ENCODE measurements at regions of chr1 and their contacts with region 1.

Region 1: DNA sequence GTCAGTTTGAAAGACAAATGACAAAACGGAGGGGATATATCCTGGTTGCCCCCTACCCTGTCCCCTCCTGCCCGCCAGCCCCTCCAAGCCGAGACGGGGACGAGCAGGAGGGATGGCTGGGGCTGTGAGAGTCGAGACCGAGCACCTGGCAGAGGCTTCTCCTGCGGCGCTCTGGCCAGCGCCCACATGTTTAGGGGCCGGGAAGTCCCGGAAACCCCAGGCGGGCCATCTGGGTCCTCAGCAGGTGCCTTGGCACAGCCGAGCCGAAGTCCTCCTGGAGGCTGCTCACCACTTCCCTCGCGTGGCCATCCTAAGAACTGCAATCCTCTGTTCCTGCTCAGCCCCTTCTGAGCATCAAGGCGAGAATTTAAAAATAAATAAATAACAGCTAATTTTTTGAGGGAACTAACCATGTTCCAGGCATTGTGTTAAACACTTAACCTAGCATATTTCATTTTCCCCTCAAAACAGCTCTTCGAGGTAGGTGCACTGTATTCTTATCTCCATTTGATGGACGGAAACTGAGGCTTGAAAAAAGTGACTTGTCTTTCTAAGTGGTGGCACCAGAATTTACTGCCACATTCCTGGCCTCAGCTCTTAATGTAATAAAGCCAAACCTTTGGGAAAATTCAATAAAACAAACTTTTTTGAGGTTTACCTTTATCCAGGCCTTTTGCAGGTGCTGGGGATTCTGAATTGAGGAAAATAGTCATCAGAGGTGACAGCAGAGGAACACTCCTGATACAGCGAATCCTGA is 3.5 kb upstream of the RIMS3 start:
- DNase-seq: peak; percentile 72
- H3K4me3 Mint-ChIP-seq: peak overlapping the region; percentile 59
- H3K27ac Mint-ChIP-seq: no peak overlapping the region
- H3K4me1 Mint-ChIP-seq: peaks cover 9% of the 10 kb centered on the region
- H3K27me3 Mint-ChIP-seq: peaks cover 5% of the 10 kb centered on the region

Region 2: GRCh38 chr1:40449684-40450494 is 219.1 kb before region 1 on chr1 and contains the start of gene ZFP69B:
- intact Hi-C with region 1: loop called (anchors 2 kb)
- DNase-seq: peak; percentile 86
- H3K4me3 Mint-ChIP-seq: peak within 1 kb of the TSS; percentile 84
- H3K27ac Mint-ChIP-seq: peak within 1 kb of the TSS; percentile 90
- H3K4me1 Mint-ChIP-seq: peaks cover 35% of the 10 kb centered on the region
- H3K27me3 Mint-ChIP-seq: no peaks in the 10 kb centered on the region
- total RNA-seq, gene ZFP69B: 5.1 and 5.8 TPM in 2 replicates

Region 3: DNA sequence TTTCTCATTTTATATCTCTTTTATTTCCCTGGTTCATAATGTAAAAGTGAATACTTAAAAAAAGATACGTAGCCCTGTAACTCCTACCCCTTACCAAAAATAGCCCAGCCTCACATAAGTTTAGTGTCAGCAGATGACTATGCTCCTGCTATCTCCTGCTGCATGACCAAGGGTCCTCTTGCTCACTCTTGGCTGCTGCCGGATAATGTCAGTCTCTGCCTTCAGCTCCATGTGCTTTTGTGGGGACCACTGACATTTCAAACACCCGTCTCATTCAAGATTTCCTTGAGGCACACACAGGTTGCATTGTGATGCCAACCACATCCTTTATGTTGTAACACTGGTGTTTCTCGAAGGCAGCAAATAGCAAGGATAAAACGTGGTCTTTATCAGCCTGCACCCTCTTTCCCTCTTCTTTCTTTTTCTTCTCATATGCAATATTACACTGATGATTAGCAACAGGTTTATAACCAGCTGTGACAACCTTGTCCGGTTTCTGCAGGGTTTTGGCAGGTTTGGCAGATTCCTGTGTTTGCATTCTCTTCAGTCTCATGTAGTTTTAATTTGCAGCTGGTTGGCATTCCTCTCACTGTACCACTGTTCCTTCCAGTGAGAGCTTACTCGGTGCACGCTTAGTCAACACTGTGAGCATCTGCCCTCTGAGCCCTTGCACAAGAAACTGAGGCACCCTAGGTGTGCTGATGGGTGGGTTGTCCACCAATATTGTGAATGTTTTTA is 75.3 kb before region 1 on chr1:
- intact Hi-C with region 1: no loop called
- DNase-seq: no peak
- H3K4me3 Mint-ChIP-seq: no peak overlapping the region
- H3K27ac Mint-ChIP-seq: no peak overlapping the region
- H3K4me1 Mint-ChIP-seq: peaks cover 16% of the 10 kb centered on the region
- H3K27me3 Mint-ChIP-seq: peaks cover 4% of the 10 kb centered on the region

Region 4: GRCh38 chr1:40612345-40612831 is 56.6 kb before region 1 on chr1:
- intact Hi-C with region 1: loop called (anchors 1 kb)
- DNase-seq: peak; percentile 65
- H3K4me3 Mint-ChIP-seq: no peak overlapping the region
- H3K27ac Mint-ChIP-seq: no peak overlapping the region
- H3K4me1 Mint-ChIP-seq: no peaks in the 10 kb centered on the region
- H3K27me3 Mint-ChIP-seq: peaks cover 11% of the 10 kb centered on the region

Region 5: GRCh38 chr1:40650075-40650474 is 18.9 kb before region 1 on chr1:
- intact Hi-C with region 1: loop called (anchors 1 kb)
- DNase-seq: no peak
- H3K4me3 Mint-ChIP-seq: no peak overlapping the region
- H3K27ac Mint-ChIP-seq: no peak overlapping the region
- H3K4me1 Mint-ChIP-seq: no peaks in the 10 kb centered on the region
- H3K27me3 Mint-ChIP-seq: no peaks in the 10 kb centered on the region

Region 6: GRCh38 chr1:40802078-40802741 is 133.3 kb after region 1 on chr1:
- intact Hi-C with region 1: loop called (anchors 5 kb)
- DNase-seq: peak; percentile 80
- H3K4me3 Mint-ChIP-seq: peak overlapping the region; percentile 37
- H3K27ac Mint-ChIP-seq: peak overlapping the region; percentile 34
- H3K4me1 Mint-ChIP-seq: peaks cover 33% of the 10 kb centered on the region
- H3K27me3 Mint-ChIP-seq: peaks cover 2% of the 10 kb centered on the region

Region 7: GRCh38 chr1:41404308-41404761 is 735.4 kb after region 1 on chr1:
- intact Hi-C with region 1: no loop called
- DNase-seq: no peak
- H3K4me3 Mint-ChIP-seq: no peak overlapping the region
- H3K27ac Mint-ChIP-seq: no peak overlapping the region
- H3K4me1 Mint-ChIP-seq: no peaks in the 10 kb centered on the region
- H3K27me3 Mint-ChIP-seq: peaks cover 22% of the 10 kb centered on the region